ENCODE measurements at regions of chr11 and their contacts with region 1.

Region 1: GRCh38 chr11:60251485-60252212 is 8.7 kb upstream of the MS4A4E start:
- DNase-seq: peak; percentile 43
- ATAC-seq: no peak
- H3K4me3 Mint-ChIP-seq: no peak overlapping the region
- H3K27ac Mint-ChIP-seq: no peak overlapping the region
- H3K4me1 Mint-ChIP-seq: no peaks in the 10 kb centered on the region
- H3K27me3 Mint-ChIP-seq: peaks cover 32% of the 10 kb centered on the region

Region 2: DNA sequence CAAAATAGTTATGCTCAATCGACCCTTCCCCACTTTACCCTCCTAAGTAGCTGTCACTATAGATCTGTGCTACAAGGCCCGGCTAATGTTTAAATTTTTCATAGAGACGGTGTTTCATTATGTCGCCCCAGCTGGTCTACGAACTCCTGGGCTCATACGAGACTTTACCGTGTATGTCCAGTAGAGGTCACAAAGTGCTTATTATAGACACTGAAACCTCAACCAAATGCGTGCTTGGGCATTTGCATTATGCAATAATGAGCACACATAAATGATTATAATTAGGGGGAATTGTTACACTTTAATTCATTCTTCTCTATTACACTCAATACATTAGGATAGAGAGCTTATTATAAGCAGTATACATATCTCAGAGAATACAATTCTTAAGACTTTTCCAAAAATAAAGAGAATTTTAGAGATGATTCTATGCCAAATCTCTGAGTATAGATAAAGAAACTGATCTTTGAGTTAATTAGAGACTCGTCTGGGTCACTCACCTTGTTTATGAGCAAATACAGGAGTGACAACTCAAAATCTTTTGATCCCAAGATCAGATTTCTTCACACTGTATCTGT is 428.6 kb before region 1 on chr11:
- CTCF ChIA-PET with region 1: interaction called, 11 read pairs
- DNase-seq: peak; percentile 56
- ATAC-seq: peak; percentile 88
- H3K4me3 Mint-ChIP-seq: no peak overlapping the region
- H3K27ac Mint-ChIP-seq: no peak overlapping the region
- H3K4me1 Mint-ChIP-seq: peaks cover 13% of the 10 kb centered on the region
- H3K27me3 Mint-ChIP-seq: peaks cover 2% of the 10 kb centered on the region

Region 3: DNA sequence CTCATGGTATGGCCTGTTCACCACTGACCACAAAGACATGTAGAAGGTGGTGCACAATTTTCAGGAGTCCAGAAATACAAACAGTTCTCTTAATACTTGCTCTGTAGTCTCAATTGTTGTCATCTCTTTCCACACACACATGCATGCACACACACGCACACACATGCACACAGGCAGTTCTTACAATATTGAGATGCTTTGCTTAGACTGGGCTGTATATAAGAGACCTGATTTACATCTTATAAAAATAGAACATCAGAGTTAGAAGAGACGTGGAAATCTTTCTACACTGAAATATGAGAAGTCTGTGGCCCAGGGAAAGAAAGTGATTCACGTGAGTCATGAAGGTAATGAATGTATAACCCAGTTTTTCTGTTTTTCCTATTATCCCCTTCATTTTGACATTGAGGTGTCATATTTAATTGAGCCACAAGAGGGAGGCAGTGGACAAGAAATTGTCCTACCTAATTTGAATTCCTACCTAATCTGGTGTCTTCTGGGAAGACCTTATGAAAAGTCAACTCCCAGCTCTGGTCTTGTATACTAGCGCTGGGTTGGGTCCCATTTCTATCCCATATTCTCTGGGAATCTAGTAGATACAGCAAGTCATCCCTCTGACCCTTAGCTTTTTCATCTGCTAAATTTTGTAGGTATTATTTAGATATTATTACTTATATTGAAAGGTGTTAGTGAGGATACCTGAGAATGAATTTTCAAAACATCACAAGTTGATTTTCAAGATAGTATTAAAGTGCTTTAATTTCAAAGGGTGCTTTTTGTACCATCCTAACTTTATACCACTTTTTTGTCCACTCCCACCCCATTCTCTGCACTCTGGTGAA is 13.9 kb after region 1 on chr11:
- CTCF ChIA-PET with region 1: interaction called, 14 read pairs
- DNase-seq: no peak
- ATAC-seq: no peak
- H3K4me3 Mint-ChIP-seq: no peak overlapping the region
- H3K27ac Mint-ChIP-seq: no peak overlapping the region
- H3K4me1 Mint-ChIP-seq: no peaks in the 10 kb centered on the region
- H3K27me3 Mint-ChIP-seq: peaks cover 36% of the 10 kb centered on the region

Region 4: GRCh38 chr11:60303661-60304060 is 52.0 kb after region 1 on chr11:
- CTCF ChIA-PET with region 1: no interaction called
- DNase-seq: no peak
- ATAC-seq: no peak
- H3K4me3 Mint-ChIP-seq: no peak overlapping the region
- H3K27ac Mint-ChIP-seq: no peak overlapping the region
- H3K4me1 Mint-ChIP-seq: peaks cover 10% of the 10 kb centered on the region
- H3K27me3 Mint-ChIP-seq: peaks cover 22% of the 10 kb centered on the region

Measured in activated CD8-positive, alpha-beta memory T cell treated with anti-CD3 and anti-CD28 coated beads, Interleukin-2, amount 10 ng/mL, durations not matched to agents 7 days and 5 days (primary cell).